MCF 10A (cell line): ENCODE measurements at regions of chr17 and their contacts with region 1.

Region 1: DNA sequence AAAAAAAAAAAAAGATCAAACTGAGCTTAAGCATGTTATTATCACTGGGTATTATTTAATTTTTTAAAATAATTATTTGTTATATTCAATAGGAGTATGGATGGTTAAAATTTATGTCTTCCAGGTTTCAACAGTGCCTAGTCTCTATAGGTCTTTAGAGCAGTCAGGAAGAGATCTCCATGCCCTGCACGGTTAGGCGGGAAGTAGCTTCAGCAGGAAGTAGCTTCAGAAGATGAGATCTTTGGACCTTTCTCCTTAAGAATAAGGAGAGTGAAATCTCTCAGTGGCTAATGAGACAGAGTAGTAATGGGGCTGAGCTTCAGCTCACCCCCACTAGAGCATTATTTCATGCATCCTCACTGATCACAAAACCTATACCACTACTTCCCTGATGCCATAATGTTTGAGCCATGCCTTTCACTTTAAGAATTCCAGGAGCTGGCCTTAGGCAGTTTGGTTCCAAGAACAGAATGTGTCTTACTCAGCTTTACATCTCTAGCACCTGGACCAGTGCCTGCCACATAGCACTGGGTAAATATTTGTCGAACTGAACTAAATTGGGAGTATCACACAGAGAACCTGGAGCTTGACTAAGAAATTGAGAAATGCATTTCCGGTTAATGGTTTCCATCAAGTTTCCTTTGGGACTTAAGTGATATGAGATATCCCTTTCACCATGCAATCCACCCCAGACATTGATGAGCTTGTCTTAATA is 43.5 kb downstream of the SCPEP1 start:
- DNase-seq: peak; percentile 82
- H3K4me3 Mint-ChIP-seq: no peak overlapping the region
- H3K27ac Mint-ChIP-seq: no peak overlapping the region
- H3K4me1 Mint-ChIP-seq: peaks cover 4% of the 10 kb centered on the region
- H3K27me3 Mint-ChIP-seq: no peaks in the 10 kb centered on the region
- CTCF ChIP-seq: no peak

Region 2: DNA sequence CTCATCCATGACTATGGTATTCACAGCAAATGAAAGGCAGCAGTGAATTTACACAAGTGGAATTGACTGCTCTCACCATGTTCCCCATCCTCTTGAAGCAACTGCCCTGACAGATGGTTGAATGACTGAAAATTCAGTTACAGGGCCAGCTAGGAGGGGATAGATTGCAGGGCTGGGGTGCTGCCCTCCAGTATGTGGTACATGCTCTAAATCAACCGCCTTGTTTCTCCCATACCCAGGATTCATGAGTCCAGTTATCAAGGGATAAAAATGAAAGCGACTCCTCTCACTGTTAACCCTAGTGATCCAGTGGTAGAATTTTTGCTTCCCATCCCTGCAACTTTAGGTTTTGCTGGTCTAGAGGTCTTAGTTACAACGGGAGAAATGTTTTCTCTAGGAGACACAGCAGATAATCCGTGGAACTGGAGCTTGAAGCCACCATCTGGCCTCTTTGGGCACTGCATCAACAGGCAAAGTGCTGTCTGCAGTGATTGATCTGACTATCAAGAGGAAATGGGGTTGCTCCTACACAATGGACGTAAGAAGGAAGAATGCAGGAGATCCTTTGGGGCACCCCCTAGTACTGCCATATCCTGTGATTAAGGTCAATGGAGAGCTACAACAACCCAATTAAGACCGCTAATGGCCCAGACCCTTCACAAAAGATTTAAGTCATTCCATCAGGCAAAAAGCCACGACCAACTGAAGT is 11.5 kb before region 1 on chr17:
- CTCF ChIA-PET with region 1: interaction called, 8 read pairs
- POLR2A ChIA-PET with region 1: interaction called, 13 read pairs
- intact Hi-C with region 1: no loop called
- DNase-seq: peak; percentile 68
- H3K4me3 Mint-ChIP-seq: no peak overlapping the region
- H3K27ac Mint-ChIP-seq: no peak overlapping the region
- H3K4me1 Mint-ChIP-seq: peaks cover 6% of the 10 kb centered on the region
- H3K27me3 Mint-ChIP-seq: no peaks in the 10 kb centered on the region
- CTCF ChIP-seq: peak; percentile 76

Region 3: DNA sequence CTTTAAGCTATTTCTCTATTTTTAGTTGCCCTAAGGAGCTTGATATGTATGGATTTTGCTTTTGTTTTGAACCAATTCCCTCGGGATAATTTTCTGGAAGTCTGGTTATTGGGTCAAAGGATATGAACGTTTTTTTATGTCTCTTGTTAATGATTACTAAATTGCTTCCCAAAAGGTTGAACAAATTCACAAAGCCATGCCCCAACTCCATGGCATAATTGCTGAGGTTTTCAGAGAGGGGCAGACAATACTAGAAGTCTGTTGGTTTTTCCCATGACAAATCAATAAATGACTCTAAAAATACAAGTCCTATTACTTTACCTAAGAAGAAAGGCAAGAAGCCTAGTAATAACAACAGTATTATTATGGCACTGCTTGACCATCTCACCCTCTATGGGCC is 52.2 kb after region 1 on chr17:
- CTCF ChIA-PET with region 1: no interaction called
- POLR2A ChIA-PET with region 1: no interaction called
- intact Hi-C with region 1: no loop called
- DNase-seq: no peak
- H3K4me3 Mint-ChIP-seq: no peak overlapping the region
- H3K27ac Mint-ChIP-seq: no peak overlapping the region
- H3K4me1 Mint-ChIP-seq: no peaks in the 10 kb centered on the region
- H3K27me3 Mint-ChIP-seq: no peaks in the 10 kb centered on the region
- CTCF ChIP-seq: no peak

Region 4: DNA sequence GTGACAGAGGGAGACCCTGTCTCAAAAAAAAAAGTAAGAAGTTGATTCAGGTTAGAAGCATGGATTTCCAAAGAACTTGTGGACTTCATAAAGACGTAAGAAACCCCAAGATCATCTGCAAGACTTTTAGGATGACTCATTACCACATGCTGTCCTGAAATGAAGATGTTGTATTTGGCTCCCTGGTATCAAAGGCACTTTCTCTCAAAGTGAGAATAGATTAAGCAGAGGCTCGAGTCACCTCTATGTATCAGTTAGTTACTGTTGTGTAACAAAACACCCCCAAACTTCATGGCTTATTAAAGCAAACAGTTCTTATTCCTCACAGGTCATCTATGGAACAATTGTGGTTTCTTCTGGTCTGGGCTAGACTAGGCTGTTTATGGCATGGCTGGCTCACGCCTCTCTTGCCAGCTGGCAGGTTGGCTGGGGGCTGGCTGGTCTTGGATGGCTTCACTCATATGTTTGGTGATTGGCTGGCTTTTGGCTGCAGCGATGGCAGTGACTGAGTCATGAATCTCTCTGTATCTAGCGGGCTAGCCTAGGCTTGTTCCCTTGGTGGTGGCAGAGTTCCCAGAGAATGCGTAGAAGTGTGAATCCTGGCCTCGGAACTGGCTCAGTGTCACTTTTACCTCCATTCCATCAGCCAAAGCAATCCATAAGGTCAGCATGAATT is 174.5 kb after region 1 on chr17:
- CTCF ChIA-PET with region 1: no interaction called
- POLR2A ChIA-PET with region 1: no interaction called
- intact Hi-C with region 1: no loop called
- DNase-seq: peak; percentile 94
- H3K4me3 Mint-ChIP-seq: no peak overlapping the region
- H3K27ac Mint-ChIP-seq: peak overlapping the region; percentile 94
- H3K4me1 Mint-ChIP-seq: peaks cover 6% of the 10 kb centered on the region
- H3K27me3 Mint-ChIP-seq: no peaks in the 10 kb centered on the region
- CTCF ChIP-seq: no peak